Calu3 (cell line): ENCODE measurements at regions of chr1 and their contacts with region 1.

Region 1: GRCh38 chr1:113452921-113453770 is 62.8 kb downstream of the MAGI3 start:
- DNase-seq: no peak
- H3K4me3 Mint-ChIP-seq: no peak overlapping the region
- H3K27ac Mint-ChIP-seq: no peak overlapping the region
- H3K4me1 Mint-ChIP-seq: peaks cover 41% of the 10 kb centered on the region
- H3K27me3 Mint-ChIP-seq: no peaks in the 10 kb centered on the region
- CTCF ChIP-seq: no peak

Region 2: DNA sequence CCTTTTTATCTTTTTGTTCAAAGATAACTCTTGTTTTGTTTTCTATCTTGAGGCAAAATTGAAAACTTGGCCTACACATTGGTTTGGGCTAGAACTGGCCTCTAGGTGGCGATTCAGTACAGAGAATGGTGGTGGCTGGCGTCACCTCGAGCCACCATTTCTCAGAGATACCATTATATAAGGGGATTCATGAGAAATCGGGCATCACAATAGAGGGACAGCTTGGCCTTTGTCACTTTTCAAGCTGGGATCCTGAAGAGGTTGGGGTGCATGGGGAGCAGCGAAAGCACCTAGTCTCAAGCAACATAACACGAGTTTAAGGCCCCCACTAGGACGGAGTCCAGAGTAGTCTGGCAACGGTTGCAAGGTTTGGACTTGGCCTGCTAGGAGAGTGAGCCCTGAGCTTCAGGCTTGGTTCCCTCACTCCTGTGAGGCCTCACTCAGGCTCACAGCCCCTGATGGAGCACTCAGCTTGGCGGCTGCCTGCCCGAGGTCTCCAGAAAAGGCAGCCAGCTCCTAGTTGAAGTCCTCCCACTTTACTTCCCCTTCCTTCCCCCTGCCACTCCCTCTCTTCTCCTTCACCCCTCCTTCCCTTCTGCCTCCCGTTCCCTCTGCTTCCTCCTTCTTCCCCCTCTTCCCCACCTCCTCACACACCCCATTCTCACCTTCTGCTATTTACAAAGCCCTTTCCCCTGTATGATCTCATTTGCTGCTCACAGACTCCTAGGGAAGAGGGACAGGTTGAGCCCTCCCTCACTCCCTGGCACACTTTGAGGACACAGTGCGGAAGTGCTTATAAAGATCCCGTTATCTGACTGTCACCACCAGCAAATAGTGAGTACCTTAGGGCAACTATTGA is 312.3 kb before region 1 on chr1:
- CTCF ChIA-PET with region 1: interaction called, 7 read pairs
- intact Hi-C with region 1: loop called (anchors 1 kb)
- DNase-seq: peak; percentile 56
- H3K4me3 Mint-ChIP-seq: no peak overlapping the region
- H3K27ac Mint-ChIP-seq: no peak overlapping the region
- H3K4me1 Mint-ChIP-seq: peaks cover 13% of the 10 kb centered on the region
- H3K27me3 Mint-ChIP-seq: no peaks in the 10 kb centered on the region
- CTCF ChIP-seq: peak; percentile 68

Region 3: GRCh38 chr1:113199760-113200455 is 253.2 kb before region 1 on chr1:
- CTCF ChIA-PET with region 1: no interaction called
- intact Hi-C with region 1: no loop called
- DNase-seq: no peak
- H3K4me3 Mint-ChIP-seq: no peak overlapping the region
- H3K27ac Mint-ChIP-seq: no peak overlapping the region
- H3K4me1 Mint-ChIP-seq: no peaks in the 10 kb centered on the region
- H3K27me3 Mint-ChIP-seq: no peaks in the 10 kb centered on the region
- CTCF ChIP-seq: no peak

Region 4: DNA sequence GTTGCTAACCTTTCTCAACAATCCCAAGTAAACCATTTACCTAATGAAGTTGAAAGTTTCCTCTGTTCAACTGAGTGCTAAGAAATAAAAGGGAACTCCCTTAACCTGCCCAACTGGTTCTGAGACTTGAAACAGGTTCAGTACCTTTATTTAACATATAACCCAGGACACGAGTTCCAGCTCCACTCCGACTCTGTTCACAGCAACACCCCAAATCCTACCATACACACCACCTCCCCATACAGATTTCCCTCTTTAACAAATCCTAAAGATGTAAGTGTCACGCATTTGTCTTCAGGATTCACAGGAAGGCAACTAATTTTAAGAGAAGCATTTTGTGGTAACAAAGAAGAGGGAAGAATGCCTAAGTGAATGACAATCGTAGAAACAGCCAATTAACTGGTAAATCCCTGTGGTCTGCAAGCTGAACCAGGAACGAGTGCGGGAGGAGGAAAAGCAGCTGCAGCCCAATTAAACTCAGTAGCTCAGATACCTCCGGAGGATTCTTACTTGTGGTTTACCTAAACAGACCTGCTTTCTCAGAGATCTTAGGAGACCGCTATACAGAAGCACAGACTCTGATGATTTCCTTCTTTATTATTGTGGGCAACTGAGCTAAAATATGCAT is 197.3 kb before region 1 on chr1:
- CTCF ChIA-PET with region 1: no interaction called
- intact Hi-C with region 1: loop called (anchors 5 kb)
- DNase-seq: peak; percentile 55
- H3K4me3 Mint-ChIP-seq: peak overlapping the region; percentile 63
- H3K27ac Mint-ChIP-seq: peak overlapping the region; percentile 72
- H3K4me1 Mint-ChIP-seq: peaks cover 27% of the 10 kb centered on the region
- H3K27me3 Mint-ChIP-seq: no peaks in the 10 kb centered on the region
- CTCF ChIP-seq: no peak

Region 5: GRCh38 chr1:113557177-113557576 is 104.0 kb after region 1 on chr1:
- CTCF ChIA-PET with region 1: no interaction called
- intact Hi-C with region 1: no loop called
- DNase-seq: no peak
- H3K4me3 Mint-ChIP-seq: no peak overlapping the region
- H3K27ac Mint-ChIP-seq: no peak overlapping the region
- H3K4me1 Mint-ChIP-seq: peaks cover under 1% of the 10 kb centered on the region
- H3K27me3 Mint-ChIP-seq: no peaks in the 10 kb centered on the region
- CTCF ChIP-seq: no peak

Region 6: GRCh38 chr1:113793878-113794834 is 341.0 kb after region 1 on chr1:
- CTCF ChIA-PET with region 1: no interaction called
- intact Hi-C with region 1: no loop called
- DNase-seq: no peak
- H3K4me3 Mint-ChIP-seq: no peak overlapping the region
- H3K27ac Mint-ChIP-seq: no peak overlapping the region
- H3K4me1 Mint-ChIP-seq: no peaks in the 10 kb centered on the region
- H3K27me3 Mint-ChIP-seq: no peaks in the 10 kb centered on the region
- CTCF ChIP-seq: no peak